H1 (cell line): ENCODE measurements at regions of chr2 and their contacts with region 1.

Region 1: GRCh38 chr2:190636373-190636772 is 12.5 kb upstream of the NAB1 start:
- DNase-seq: no peak
- H3K4me3 ChIP-seq: no peak overlapping the region
- H3K27ac ChIP-seq: no peak overlapping the region
- H3K4me1 ChIP-seq: no peaks in the 10 kb centered on the region
- H3K27me3 ChIP-seq: no peaks in the 10 kb centered on the region
- CTCF ChIP-seq: no peak
- EP300 ChIP-seq: no peak
- POLR2A ChIP-seq: no peak
- RAD21 ChIP-seq: no peak

Region 2: DNA sequence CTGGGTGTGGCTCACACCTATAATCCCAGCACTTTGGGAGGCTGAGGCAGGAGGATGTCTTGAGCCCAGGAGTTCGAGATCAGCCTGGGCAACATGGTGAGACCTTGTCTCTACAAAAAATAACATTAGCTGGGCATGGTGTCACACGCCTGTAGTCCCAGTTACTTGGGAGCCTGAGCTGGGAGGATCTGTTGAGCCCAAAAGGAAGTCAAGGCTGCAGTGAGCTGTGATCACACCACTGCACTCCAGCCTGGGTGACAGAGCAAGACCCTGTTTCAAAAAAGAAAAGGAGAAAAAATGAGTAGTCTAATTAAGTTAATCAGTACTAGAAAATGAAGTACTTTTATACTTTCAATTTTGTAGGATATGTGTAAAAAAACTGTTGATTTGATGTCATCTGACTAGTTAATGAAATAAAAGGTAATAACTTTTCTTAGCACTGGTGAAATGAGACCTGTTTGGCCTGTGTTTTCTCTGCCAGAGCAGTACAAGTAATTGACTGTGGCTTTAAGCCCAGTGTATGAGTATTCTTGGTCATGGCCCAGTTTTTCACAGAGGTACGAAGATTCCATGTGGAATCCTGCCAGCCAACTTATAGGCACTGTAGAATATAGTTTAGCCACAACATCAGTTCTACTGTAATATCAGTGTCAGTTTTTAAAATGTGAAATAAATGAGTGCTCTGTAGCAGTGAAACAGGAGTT is 192.4 kb before region 1 on chr2:
- CTCF ChIA-PET with region 1: no interaction called
- POLR2A ChIA-PET with region 1: no interaction called
- DNase-seq: no peak
- H3K4me3 ChIP-seq: no peak overlapping the region
- H3K27ac ChIP-seq: no peak overlapping the region
- H3K4me1 ChIP-seq: peaks cover 0 to 2% (median 0%) of the 10 kb centered on the region in 4 experiments; a peak in 1 of 7 replicates
- H3K27me3 ChIP-seq: no peaks in the 10 kb centered on the region
- CTCF ChIP-seq: no peak
- EP300 ChIP-seq: no peak
- POLR2A ChIP-seq: no peak
- RAD21 ChIP-seq: no peak

Region 3: GRCh38 chr2:190618030-190618429 is 18.3 kb before region 1 on chr2:
- CTCF ChIA-PET with region 1: interaction called, 10 read pairs
- POLR2A ChIA-PET with region 1: no interaction called
- DNase-seq: no peak
- H3K4me3 ChIP-seq: no peak overlapping the region
- H3K27ac ChIP-seq: no peak overlapping the region
- H3K4me1 ChIP-seq: peaks cover 3 to 13% (median 6%) of the 10 kb centered on the region in 4 experiments
- H3K27me3 ChIP-seq: no peaks in the 10 kb centered on the region
- CTCF ChIP-seq: no peak
- EP300 ChIP-seq: no peak
- POLR2A ChIP-seq: no peak
- RAD21 ChIP-seq: no peak

Region 4: DNA sequence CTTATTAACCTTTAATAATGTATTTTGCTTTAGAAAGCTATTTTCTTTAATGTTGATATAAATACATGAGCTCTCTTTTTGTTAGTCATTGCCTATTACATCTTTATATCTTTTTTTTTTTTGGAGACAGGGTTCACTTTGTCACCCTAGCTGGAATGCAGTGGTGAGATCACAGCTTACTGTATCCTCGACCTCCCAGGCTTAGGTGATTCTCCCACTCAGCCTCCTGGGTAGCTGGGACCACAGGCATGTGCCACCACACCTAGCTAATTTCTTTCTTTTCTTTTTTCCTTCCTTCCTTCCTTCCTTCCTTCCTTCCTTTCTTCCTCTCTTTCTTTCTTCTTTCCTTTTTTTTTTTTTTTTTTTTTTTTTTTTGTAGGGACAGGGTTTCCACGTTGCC is 27.9 kb after region 1 on chr2:
- CTCF ChIA-PET with region 1: no interaction called
- POLR2A ChIA-PET with region 1: no interaction called
- DNase-seq: no peak
- H3K4me3 ChIP-seq: no peak overlapping the region
- H3K27ac ChIP-seq: no peak overlapping the region
- H3K4me1 ChIP-seq: no peaks in the 10 kb centered on the region
- H3K27me3 ChIP-seq: no peaks in the 10 kb centered on the region
- CTCF ChIP-seq: no peak
- EP300 ChIP-seq: no peak
- POLR2A ChIP-seq: no peak
- RAD21 ChIP-seq: no peak